ENCODE measurements at regions of chr17 and their contacts with region 1.

Region 1: GRCh38 chr17:59619293-59620063 is at the start of gene CLTC:
- DNase-seq: peak; percentile 100
- ATAC-seq: peak; percentile 80
- H3K4me3 ChIP-seq: peak within 1 kb of the TSS; percentile 69 to 100 (median 99)
- H3K4me3 Mint-ChIP-seq: peak within 1 kb of the TSS; percentile 90
- H3K27ac ChIP-seq: peak within 1 kb of the TSS; percentile 96 to 99
- H3K27ac Mint-ChIP-seq: peak within 1 kb of the TSS; percentile 97
- H3K4me1 ChIP-seq: peaks cover 44 to 48% of the 10 kb centered on the region in 2 donors
- H3K4me1 Mint-ChIP-seq: peaks cover 47% of the 10 kb centered on the region
- H3K27me3 ChIP-seq: no peaks in the 10 kb centered on the region
- H3K27me3 Mint-ChIP-seq: no peaks in the 10 kb centered on the region
- CTCF ChIP-seq: no peak
- total RNA-seq, gene CLTC: 114 and 126 TPM in 2 replicates

Region 2: GRCh38 chr17:59565171-59565969 is 54.1 kb before region 1 on chr17 and contains the start of gene DHX40:
- CTCF ChIA-PET with region 1: interaction called, 5 read pairs
- POLR2A ChIA-PET with region 1: interaction called, 16 read pairs
- intact Hi-C with region 1: loop called (anchors 1 kb)
- DNase-seq: peak; percentile 98
- ATAC-seq: peak; percentile 96
- H3K4me3 ChIP-seq: peak within 1 kb of the TSS; percentile 91 to 100 (median 96)
- H3K4me3 Mint-ChIP-seq: peak within 1 kb of the TSS; percentile 99
- H3K27ac ChIP-seq: peak within 1 kb of the TSS; percentile 81 to 92
- H3K27ac Mint-ChIP-seq: peak within 1 kb of the TSS; percentile 99
- H3K4me1 ChIP-seq: peaks cover 13 to 15% of the 10 kb centered on the region in 2 donors
- H3K4me1 Mint-ChIP-seq: peaks cover 19% of the 10 kb centered on the region
- H3K27me3 ChIP-seq: no peaks in the 10 kb centered on the region
- H3K27me3 Mint-ChIP-seq: no peaks in the 10 kb centered on the region
- CTCF ChIP-seq: no peak
- total RNA-seq, gene DHX40: 28.7 and 30.4 TPM in 2 replicates

Region 3: DNA sequence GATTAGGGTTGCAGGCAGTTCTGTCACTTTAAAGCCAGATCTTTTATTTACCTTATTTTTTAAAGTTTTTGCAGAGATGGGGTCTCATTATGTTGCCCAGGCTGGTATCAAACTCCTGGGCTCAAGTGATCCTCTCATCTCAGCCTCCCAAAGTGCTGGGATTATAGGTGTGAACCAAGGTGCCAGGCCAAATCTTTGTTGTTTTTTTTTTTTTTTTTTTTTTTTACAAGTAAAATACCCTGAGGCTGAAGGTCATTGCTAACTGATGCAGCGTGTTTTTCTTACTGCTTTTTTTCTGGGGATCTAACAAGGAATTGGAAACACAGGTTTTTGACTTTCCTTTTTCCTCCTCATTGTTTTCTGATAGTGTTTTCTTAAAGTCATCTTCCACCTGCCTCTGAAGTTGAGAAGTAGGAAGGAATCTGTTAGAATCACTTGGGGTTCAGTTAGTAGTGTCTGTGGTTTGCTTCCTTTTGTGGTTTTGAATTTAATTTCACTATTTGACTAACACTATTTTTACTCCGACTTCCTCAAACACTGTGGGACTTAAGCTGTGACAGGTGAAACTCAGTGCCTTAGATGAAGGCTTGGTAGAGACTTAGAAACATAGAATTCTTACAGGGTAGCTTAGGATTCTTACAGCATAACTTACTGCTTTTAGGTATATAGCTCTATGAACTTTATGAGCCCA is 22.5 kb after region 1 on chr17:
- CTCF ChIA-PET with region 1: interaction called, 12 read pairs
- POLR2A ChIA-PET with region 1: interaction called, 20 read pairs
- intact Hi-C with region 1: loop called (anchors 1 kb)
- DNase-seq: peak; percentile 80
- ATAC-seq: peak; percentile 88
- H3K4me3 ChIP-seq: peak overlapping the region in 3 of 5 experiments; percentile 8 to 43 (median 12)
- H3K4me3 Mint-ChIP-seq: peak overlapping the region; percentile 79
- H3K27ac ChIP-seq: peak overlapping the region; percentile 17 to 71
- H3K27ac Mint-ChIP-seq: peak overlapping the region; percentile 81
- H3K4me1 ChIP-seq: peaks cover 48 to 53% of the 10 kb centered on the region in 2 donors
- H3K4me1 Mint-ChIP-seq: peaks cover 68% of the 10 kb centered on the region
- H3K27me3 ChIP-seq: no peaks in the 10 kb centered on the region
- H3K27me3 Mint-ChIP-seq: no peaks in the 10 kb centered on the region
- CTCF ChIP-seq: no peak

Region 4: GRCh38 chr17:59651346-59651745 is 31.9 kb after region 1 on chr17:
- CTCF ChIA-PET with region 1: interaction called, 4 read pairs
- POLR2A ChIA-PET with region 1: no interaction called
- intact Hi-C with region 1: loop called (anchors 5 kb)
- DNase-seq: no peak
- ATAC-seq: no peak
- H3K4me3 ChIP-seq: no peak overlapping the region
- H3K4me3 Mint-ChIP-seq: no peak overlapping the region
- H3K27ac ChIP-seq: no peak overlapping the region
- H3K27ac Mint-ChIP-seq: no peak overlapping the region
- H3K4me1 ChIP-seq: no peaks in the 10 kb centered on the region
- H3K4me1 Mint-ChIP-seq: peaks cover 5% of the 10 kb centered on the region
- H3K27me3 ChIP-seq: no peaks in the 10 kb centered on the region
- H3K27me3 Mint-ChIP-seq: no peaks in the 10 kb centered on the region
- CTCF ChIP-seq: no peak

Region 5: DNA sequence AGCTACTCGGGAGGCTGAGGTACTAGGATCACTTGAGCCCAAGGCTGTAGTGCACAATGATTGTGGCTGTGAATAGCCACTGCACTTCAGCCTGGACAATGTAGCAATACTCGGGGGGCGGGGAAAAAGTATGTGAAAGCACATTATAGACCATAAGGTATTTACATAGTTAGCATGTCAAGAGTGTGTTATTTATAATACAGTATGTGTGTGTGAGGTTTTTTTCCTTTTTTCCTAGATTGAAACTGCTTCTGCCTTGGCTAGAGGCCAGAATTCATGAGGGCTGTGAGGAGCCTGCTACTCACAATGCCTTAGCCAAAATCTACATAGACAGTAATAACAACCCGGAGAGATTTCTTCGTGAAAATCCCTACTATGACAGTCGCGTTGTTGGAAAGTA is 57.2 kb after region 1 on chr17:
- CTCF ChIA-PET with region 1: no interaction called
- POLR2A ChIA-PET with region 1: no interaction called
- intact Hi-C with region 1: no loop called
- DNase-seq: no peak
- ATAC-seq: no peak
- H3K4me3 ChIP-seq: no peak overlapping the region
- H3K4me3 Mint-ChIP-seq: no peak overlapping the region
- H3K27ac ChIP-seq: peak overlapping the region in 1 of 2 donors; percentile 80
- H3K27ac Mint-ChIP-seq: no peak overlapping the region
- H3K4me1 ChIP-seq: peaks cover 21 to 25% of the 10 kb centered on the region in 2 donors
- H3K4me1 Mint-ChIP-seq: peaks cover 29% of the 10 kb centered on the region
- H3K27me3 ChIP-seq: no peaks in the 10 kb centered on the region
- H3K27me3 Mint-ChIP-seq: no peaks in the 10 kb centered on the region
- CTCF ChIP-seq: no peak

Region 6: DNA sequence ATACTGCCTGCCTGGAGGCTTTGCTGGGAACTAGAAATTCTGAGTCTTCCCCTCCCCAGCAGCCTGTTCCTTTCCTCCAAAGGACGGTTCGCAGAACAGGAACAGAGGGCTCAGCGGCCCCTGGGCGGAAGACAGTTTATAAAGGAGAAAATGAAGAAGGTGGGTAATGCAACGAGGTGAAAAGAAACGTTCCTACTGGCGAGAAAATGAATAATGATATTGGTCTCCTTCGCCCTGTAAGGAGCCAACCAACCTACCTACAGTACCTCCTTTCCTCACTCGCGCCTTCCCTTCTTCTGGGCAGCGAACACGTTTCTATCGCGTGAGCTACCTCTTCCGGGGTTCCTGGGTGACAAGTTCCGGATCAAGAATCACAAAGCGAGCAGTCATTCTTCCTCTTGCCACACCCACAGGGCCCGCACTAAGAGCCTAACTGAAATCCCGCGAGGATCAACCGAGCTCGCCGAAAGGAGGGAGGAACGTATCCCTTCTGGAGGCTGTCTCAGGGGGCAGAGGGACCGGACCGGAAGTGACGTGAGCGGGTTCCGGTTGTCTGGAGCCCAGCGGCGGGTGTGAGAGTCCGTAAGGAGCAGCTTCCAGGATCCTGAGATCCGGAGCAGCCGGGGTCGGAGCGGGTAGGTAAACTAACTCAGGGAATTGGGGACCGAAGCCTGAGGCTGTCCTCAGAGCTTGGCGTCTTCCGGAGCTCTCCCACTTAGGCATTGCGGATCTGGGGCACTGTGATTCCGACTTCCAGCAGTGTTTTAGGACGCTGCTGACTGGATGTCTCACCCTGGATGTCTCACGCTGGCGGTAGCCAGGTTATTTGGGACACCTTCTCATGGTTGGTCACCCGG is 87.9 kb after region 1 on chr17 and contains the starts of genes PTRH2 and VMP1:
- CTCF ChIA-PET with region 1: no interaction called
- POLR2A ChIA-PET with region 1: interaction called, 9 read pairs
- intact Hi-C with region 1: loop called (anchors 1 kb)
- DNase-seq: peak; percentile 95
- ATAC-seq: peak; percentile 90
- H3K4me3 ChIP-seq: peak within 1 kb of the TSS; percentile 72 to 98 (median 94)
- H3K4me3 Mint-ChIP-seq: peak within 1 kb of the TSS; percentile 99
- H3K27ac ChIP-seq: peak within 1 kb of the TSS; percentile 86 to 98
- H3K27ac Mint-ChIP-seq: peak within 1 kb of the TSS; percentile 97
- H3K4me1 ChIP-seq: peaks cover 23 to 24% of the 10 kb centered on the region in 2 donors
- H3K4me1 Mint-ChIP-seq: peaks cover 55% of the 10 kb centered on the region
- H3K27me3 ChIP-seq: no peaks in the 10 kb centered on the region
- H3K27me3 Mint-ChIP-seq: no peaks in the 10 kb centered on the region
- CTCF ChIP-seq: no peak
- total RNA-seq, gene PTRH2: 17.8 and 22.7 TPM in 2 replicates
- total RNA-seq, gene VMP1: 78.5 and 83.5 TPM in 2 replicates

Region 7: GRCh38 chr17:59846394-59847165 is 227.1 kb after region 1 on chr17:
- CTCF ChIA-PET with region 1: no interaction called
- POLR2A ChIA-PET with region 1: no interaction called
- intact Hi-C with region 1: loop called (anchors 10 kb)
- DNase-seq: peak; percentile 77
- ATAC-seq: peak; percentile 73
- H3K4me3 ChIP-seq: no peak overlapping the region
- H3K4me3 Mint-ChIP-seq: peak overlapping the region; percentile 63
- H3K27ac ChIP-seq: peak overlapping the region; percentile 62 to 85
- H3K27ac Mint-ChIP-seq: peak overlapping the region; percentile 78
- H3K4me1 ChIP-seq: peaks cover 42 to 49% of the 10 kb centered on the region in 2 donors
- H3K4me1 Mint-ChIP-seq: peaks cover 60% of the 10 kb centered on the region
- H3K27me3 ChIP-seq: no peaks in the 10 kb centered on the region
- H3K27me3 Mint-ChIP-seq: no peaks in the 10 kb centered on the region
- CTCF ChIP-seq: no peak

Measured in B cell (primary cell).